ENCODE measurements at regions of chr3 and their contacts with region 1.

Region 1: DNA sequence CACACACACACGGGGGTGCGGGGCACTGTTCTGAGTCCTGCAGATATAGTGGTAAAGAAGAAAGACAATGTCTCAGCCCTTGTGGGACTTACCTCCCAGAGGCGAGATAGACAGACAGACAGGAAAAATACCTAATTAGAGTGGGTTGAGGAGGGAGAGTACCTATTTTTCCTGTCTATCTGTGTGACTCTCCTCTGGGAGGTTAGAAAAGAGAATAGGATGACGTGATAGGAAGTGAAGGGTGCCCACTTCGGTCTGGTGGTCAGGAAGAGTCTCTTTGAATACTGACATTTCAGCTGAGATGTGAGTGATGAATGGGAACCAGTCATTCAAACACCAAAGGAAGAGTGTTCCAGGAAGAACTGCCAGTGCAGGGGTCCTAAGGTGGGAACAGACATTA is 4.1 kb upstream of the APOD start:
- DNase-seq: peak; percentile 28
- H3K4me3 Mint-ChIP-seq: no peak overlapping the region
- H3K27ac Mint-ChIP-seq: no peak overlapping the region
- H3K4me1 Mint-ChIP-seq: peaks cover 9% of the 10 kb centered on the region
- H3K27me3 Mint-ChIP-seq: no peaks in the 10 kb centered on the region

Region 2: DNA sequence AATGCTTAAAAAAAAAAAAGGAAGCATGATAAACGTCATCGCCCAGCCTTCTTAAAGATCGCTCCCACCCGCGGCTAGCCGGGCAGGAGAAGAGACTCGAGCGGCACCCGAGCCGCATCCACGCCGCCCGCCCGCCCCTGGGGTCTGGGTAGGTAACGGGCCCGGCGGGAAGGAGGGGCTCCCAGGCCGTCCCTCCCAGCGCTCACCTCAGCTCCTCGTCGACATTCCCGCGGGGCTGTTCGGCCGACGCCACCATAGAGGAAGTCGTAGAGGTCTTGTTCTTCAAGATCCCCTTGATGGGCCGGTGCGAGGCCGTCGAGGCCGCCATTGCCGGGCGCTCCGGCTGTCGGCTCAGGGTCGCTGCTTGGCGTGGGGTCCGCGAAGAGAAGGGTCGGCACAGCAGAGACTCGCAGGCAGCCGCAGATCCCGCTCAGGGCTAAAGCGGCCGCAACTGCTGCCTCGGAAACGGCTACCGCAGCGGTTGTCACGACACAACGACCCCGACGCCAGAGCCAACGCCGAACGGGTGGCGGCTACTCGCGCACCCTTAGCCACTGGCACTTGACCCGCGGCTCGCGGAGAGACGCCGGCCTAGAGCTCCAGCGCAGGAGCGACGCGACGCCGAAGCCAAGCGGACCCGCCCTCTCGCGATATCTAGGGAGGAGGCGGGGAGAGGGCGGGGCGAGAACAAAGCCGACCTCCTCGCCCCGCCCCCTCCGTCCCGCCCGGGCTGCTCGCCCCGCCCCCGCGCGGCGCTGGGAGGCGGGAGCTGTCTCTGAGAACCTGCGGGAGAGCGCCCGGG is 44.9 kb before region 1 on chr3 and contains the start of gene PPP1R2:
- CTCF ChIA-PET with region 1: no interaction called
- intact Hi-C with region 1: loop called (anchors 2 kb)
- DNase-seq: peak; percentile 93
- H3K4me3 Mint-ChIP-seq: peak within 1 kb of the TSS; percentile 88
- H3K27ac Mint-ChIP-seq: peak within 1 kb of the TSS; percentile 94
- H3K4me1 Mint-ChIP-seq: peaks cover 53% of the 10 kb centered on the region
- H3K27me3 Mint-ChIP-seq: no peaks in the 10 kb centered on the region
- total RNA-seq, gene PPP1R2: 99.7 to 105 TPM

Region 3: DNA sequence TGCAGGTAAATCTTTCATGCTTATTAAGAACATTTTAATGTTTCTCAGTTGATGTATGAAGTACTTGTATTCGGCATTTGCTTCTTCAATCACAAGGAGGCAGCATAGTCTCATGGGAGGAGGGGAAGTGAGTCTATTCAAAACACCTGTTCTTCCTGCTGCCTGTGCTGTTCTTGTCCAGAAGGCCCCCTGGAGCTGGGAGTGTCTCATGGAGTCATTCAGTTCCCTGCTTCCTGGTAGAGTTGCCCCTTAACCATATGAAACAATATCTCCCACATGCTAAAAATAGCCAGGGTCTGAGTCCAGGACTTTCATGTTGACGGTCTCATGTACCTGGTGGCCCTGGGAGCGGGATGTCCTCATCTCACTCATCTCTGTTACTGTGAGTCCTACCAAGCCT is 29.2 kb before region 1 on chr3:
- CTCF ChIA-PET with region 1: no interaction called
- intact Hi-C with region 1: loop called (anchors 2 kb)
- DNase-seq: peak; percentile 67
- H3K4me3 Mint-ChIP-seq: no peak overlapping the region
- H3K27ac Mint-ChIP-seq: no peak overlapping the region
- H3K4me1 Mint-ChIP-seq: peaks cover 37% of the 10 kb centered on the region
- H3K27me3 Mint-ChIP-seq: no peaks in the 10 kb centered on the region

Region 4: DNA sequence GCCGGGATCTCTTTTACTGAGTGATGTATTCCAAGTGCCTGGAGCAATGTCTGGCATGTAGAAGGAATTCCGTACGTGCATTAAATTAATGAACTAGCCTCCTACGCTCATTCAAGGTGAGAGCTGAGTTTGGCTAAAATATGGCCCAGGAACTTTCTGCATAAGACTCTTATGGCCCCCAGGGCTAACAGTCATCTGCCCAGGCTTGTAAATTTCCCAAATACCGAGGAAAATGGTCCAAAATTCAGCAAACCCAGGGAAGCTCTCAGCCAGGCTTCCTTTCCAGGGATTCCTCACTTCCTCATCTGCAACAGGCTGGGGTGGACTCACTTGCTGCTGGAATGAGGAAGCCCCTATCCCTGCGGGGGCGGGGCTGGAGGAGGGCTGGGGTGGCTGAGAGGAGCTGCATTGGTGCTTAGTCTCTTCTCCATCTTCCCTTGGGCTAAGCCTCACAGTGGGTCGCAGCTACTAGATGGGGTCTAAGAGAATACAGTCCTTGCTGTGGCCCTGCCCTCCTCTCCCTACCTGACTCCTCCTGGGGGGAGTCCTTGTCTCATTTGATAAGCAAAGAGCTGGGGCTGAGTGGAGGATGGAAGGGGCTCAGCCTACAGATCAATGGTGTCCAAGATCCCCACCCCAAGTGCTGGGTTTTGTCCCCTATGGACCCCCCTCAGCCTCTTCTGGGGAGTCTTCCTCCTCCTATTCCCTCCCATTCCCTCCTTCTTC is 24.4 kb after region 1 on chr3:
- CTCF ChIA-PET with region 1: no interaction called
- intact Hi-C with region 1: loop called (anchors 1 kb)
- DNase-seq: no peak
- H3K4me3 Mint-ChIP-seq: no peak overlapping the region
- H3K27ac Mint-ChIP-seq: peak overlapping the region; percentile 54
- H3K4me1 Mint-ChIP-seq: peaks cover 39% of the 10 kb centered on the region
- H3K27me3 Mint-ChIP-seq: no peaks in the 10 kb centered on the region

Region 5: DNA sequence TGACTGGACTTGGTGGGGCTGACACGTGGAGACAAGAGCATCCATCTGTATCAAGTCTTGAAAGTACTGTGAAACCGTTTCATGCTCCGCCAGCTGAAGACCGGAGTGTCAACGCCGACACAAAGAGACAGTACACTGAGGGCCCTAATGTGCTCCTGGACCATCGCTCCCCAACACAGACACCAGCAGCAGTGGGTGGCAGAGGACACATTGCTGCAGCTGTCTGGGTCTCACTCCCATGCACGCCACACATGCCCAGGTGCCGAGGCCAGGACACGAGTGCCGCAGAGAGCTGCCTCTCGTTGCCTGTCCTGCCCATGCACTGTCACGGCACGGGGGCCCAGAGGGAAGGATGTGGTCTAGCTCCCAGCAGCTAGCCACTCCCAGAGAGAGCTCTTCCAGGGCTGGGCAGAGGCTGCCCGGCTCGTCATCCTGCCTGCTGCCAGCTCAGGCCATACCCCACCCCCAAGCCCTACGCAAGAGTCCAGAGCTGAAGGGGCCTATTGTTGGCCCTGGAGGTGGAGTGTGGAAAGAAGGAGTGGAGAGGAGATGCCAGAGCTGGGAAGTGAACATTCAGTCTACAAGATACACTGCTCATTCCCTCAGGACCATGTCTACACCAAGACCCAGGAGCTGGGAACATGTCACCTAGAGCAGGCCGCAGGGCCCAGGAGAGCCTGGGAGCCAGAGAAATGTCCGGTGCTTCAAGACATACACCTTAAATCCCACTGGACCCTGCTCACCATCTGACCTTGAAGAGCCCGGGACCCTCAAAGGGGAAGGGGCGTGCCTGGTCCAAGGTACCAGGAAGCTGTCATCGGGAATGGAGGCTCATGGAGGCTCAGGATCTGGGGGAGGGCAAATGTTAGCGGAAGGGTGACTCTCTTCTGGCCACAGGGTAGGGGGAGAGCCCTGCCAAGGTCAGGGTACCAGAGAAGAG is 312.9 kb after region 1 on chr3:
- CTCF ChIA-PET with region 1: no interaction called
- intact Hi-C with region 1: loop called (anchors 2 kb)
- DNase-seq: peak; percentile 78
- H3K4me3 Mint-ChIP-seq: peak overlapping the region; percentile 23
- H3K27ac Mint-ChIP-seq: no peak overlapping the region
- H3K4me1 Mint-ChIP-seq: peaks cover 82% of the 10 kb centered on the region
- H3K27me3 Mint-ChIP-seq: no peaks in the 10 kb centered on the region